H1 (cell line): ENCODE measurements at regions of chr11 and their contacts with region 1.

Region 1: DNA sequence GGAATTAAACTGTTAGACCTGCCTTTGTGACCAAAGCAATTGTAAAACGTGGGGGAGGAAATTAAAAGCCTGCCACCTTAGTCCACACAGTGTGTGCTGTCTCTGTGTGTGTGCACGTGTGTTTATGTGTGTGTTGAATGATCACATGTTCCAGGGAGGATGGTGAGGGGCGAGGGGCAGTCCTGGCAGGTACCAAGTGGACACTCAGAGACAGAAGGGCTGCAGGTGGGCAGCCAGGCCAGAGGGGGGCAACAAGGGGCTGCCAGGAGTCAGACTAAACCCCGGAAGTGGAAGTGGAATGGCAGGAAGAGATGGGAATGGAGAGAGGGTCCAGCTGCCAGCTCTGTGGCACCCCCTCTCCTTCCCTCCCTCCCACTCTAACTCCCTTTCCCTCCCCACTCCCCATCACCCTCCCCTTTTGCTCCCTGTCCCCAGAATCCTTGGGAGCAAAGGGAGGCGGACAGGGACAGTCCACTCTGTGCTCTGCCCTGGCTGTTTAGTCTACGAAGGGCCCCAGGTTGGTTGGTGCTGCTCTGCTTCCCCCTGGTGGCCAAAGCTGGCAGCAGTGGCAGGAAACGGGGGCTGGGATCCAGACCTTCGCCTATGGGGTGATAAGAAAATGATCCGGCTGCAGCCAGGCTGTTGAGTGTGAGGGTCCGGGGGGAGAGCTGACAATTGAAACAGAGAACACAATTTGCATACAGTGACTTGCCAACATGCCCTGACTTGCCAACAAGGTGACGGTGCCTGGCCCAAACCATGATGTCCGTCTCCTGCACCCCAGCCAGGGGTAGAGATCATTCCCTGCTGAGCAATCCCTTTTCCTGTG is 24.4 kb downstream of the P2RY2 start:
- DNase-seq: peak in 1 of 2 experiments; percentile 97
- H3K4me3 ChIP-seq: peak overlapping the region; percentile 14 to 58 (median 22); a peak in 5 of 8 replicates
- H3K27ac ChIP-seq: peak overlapping the region; percentile 13; the same call in 1 of the 2 replicates
- H3K4me1 ChIP-seq: peaks cover 0 to 8% (median 3%) of the 10 kb centered on the region in 4 experiments; a peak in 3 of 7 replicates
- H3K27me3 ChIP-seq: no peaks in the 10 kb centered on the region
- CTCF ChIP-seq: peak; percentile 92 to 96 (median 93)
- EP300 ChIP-seq: no peak
- POLR2A ChIP-seq: peak in 1 of 2 experiments; percentile 75; a peak in 1 of 3 replicates
- RAD21 ChIP-seq: peak; percentile 80 to 85

Region 2: GRCh38 chr11:73227588-73228211 is 14.8 kb before region 1 on chr11:
- CTCF ChIA-PET with region 1: interaction called, 63 read pairs
- POLR2A ChIA-PET with region 1: no interaction called
- DNase-seq: peak in 1 of 2 experiments; percentile 87
- H3K4me3 ChIP-seq: peak overlapping the region in 1 of 4 experiments; percentile 25; a peak in 2 of 8 replicates
- H3K27ac ChIP-seq: no peak overlapping the region
- H3K4me1 ChIP-seq: peaks cover 3 to 15% (median 13%) of the 10 kb centered on the region in 4 experiments
- H3K27me3 ChIP-seq: no peaks in the 10 kb centered on the region; a peak in 2 of 7 replicates
- CTCF ChIP-seq: peak; percentile 50 to 67 (median 62)
- EP300 ChIP-seq: no peak
- POLR2A ChIP-seq: 0 out of 3 replicates have a peak, but pooled peaks of 1 of the 2 experiments have one; percentile 38
- RAD21 ChIP-seq: peak; percentile 32 to 51; a peak in 3 of 4 replicates

Region 3: GRCh38 chr11:73257342-73258103 is 15.1 kb after region 1 on chr11:
- CTCF ChIA-PET with region 1: interaction called, 132 read pairs
- POLR2A ChIA-PET with region 1: interaction called, 3 read pairs
- DNase-seq: no peak
- H3K4me3 ChIP-seq: no peak overlapping the region
- H3K27ac ChIP-seq: no peak overlapping the region
- H3K4me1 ChIP-seq: peaks cover 0 to 3% (median 1%) of the 10 kb centered on the region in 4 experiments; a peak in 1 of 7 replicates
- H3K27me3 ChIP-seq: peaks cover 0 to 2% (median 0%) of the 10 kb centered on the region in 4 experiments; a peak in 1 of 7 replicates
- CTCF ChIP-seq: no peak
- EP300 ChIP-seq: no peak
- POLR2A ChIP-seq: no peak
- RAD21 ChIP-seq: no peak

Region 4: DNA sequence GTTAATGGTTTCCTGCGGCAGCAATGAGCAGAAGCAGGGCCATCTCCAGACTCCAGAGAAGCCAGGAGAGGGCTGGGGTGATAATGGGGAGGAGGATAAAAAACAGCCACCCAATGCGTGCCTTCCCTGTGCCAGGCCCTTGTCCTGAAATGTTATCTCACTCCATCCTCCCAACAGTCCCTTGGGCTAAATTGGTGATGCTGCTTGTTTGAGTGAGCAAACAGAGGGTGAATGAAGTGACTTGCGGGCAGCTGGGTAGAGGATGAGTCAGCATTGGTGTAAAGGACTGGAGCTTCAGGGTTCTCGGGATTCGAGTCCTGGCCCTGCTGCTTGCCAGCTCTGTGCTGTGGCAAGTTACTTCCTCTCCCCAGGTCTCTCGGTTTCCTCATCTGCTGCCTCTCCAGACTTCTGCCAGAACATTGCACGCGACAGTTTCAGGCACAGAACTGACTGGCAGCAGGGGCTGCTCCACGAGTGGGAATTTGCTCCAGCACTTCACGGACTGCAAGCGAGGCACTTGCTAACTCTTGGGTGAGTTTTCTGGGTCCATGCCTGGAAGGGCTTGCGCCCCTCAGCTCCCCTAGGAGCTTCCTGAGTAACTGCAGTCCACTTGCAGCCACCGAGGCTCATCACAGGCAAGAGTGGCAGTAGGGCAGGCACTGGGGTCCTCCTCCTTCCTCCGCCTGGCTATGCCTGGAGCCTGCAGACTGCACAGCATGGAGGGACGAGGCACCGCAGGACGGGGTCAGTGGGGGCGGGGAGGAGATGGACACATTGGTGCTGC is 29.7 kb after region 1 on chr11 and contains the start of gene P2RY6:
- CTCF ChIA-PET with region 1: interaction called, 132 read pairs
- POLR2A ChIA-PET with region 1: interaction called, 3 read pairs
- DNase-seq: no peak
- H3K4me3 ChIP-seq: no peak within 1 kb of the TSS
- H3K27ac ChIP-seq: no peak within 1 kb of the TSS
- H3K4me1 ChIP-seq: peaks cover 0 to 15% (median 9%) of the 10 kb centered on the region in 4 experiments; a peak in 5 of 7 replicates
- H3K27me3 ChIP-seq: no peaks in the 10 kb centered on the region; a peak in 3 of 7 replicates
- CTCF ChIP-seq: no peak
- EP300 ChIP-seq: no peak
- POLR2A ChIP-seq: no peak
- RAD21 ChIP-seq: no peak
- total RNA-seq, gene P2RY6: not detected in 2 replicates